A549 (cell line): ENCODE measurements at regions of chr11 and their contacts with region 1.

Region 1: DNA sequence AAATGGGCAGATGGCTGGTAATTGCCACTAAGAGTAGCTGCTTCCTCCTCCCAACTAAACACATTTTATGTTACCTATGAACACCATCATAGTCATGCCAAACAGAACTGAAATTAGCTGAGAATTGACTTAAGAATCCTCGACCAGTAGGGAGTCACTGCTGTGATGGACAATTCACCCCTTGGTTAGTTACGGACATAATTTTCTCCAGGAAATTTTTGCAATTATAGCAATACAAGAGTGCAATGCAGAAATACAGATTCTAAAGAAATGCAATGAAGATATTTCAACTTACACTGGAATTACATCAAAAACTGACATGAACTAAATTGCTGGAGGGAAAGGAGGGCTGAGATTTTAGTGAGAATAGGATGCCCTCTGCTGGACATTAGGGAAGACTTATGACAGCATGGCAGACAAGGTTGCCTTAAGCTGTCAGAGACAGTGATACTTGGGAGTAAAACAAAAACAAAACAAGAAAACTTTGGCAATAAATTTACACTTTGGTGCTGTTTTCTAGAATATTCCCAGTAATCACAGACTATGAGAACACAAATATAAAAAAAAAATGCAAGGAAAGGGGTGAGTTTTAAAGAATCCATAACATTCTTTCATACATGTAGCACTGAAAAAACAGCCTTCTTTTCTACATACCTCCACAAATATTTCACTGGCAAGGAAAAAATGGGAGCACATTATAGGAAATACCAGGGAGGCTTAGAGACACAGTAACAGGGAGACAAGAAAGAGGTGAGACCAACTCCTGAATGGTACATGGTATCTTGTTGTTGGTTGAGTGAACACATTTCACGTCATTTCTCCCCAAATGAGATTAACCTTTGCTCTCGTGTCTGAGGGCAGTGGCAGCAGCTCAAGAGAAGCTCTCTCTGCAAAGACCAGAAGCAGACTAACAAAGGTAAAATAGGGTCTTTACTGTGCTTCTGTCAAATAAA is 11.2 kb upstream of the PPP2R1B start:
- DNase-seq: peak; percentile 47 to 66
- ATAC-seq: peak; percentile 92 to 98
- H3K4me3 ChIP-seq: no peak overlapping the region
- H3K27ac ChIP-seq: no peak overlapping the region
- H3K4me1 ChIP-seq: no peaks in the 10 kb centered on the region
- CTCF ChIP-seq: peak; percentile 73
- EP300 ChIP-seq: no peak
- POLR2A ChIP-seq: no peak
- RAD21 ChIP-seq: peak; percentile 76 to 84

Region 2: GRCh38 chr11:111601979-111602864 is 175.1 kb before region 1 on chr11 and contains the start of gene SIK2:
- CTCF ChIA-PET with region 1: interaction called, 30 read pairs
- POLR2A ChIA-PET with region 1: no interaction called
- DNase-seq: peak; percentile 54 to 92
- ATAC-seq: peak; percentile 94
- H3K4me3 ChIP-seq: peak within 1 kb of the TSS; percentile 95
- H3K27ac ChIP-seq: peak within 1 kb of the TSS; percentile 95 to 98
- H3K4me1 ChIP-seq: peaks cover 25% of the 10 kb centered on the region; the same call in 2 of the 3 replicates
- CTCF ChIP-seq: peak; percentile 84
- EP300 ChIP-seq: no peak
- POLR2A ChIP-seq: peak; percentile 37; the same call in 1 of the 2 replicates
- RAD21 ChIP-seq: peak; percentile 86 to 96
- polyA plus RNA-seq, gene SIK2: 9.0 and 11.4 TPM in 2 replicates

Region 3: GRCh38 chr11:111663820-111664219 is 113.5 kb before region 1 on chr11:
- CTCF ChIA-PET with region 1: no interaction called
- POLR2A ChIA-PET with region 1: no interaction called
- DNase-seq: no peak
- ATAC-seq: no peak
- H3K4me3 ChIP-seq: no peak overlapping the region
- H3K27ac ChIP-seq: no peak overlapping the region
- H3K4me1 ChIP-seq: no peaks in the 10 kb centered on the region
- CTCF ChIP-seq: no peak
- EP300 ChIP-seq: no peak
- POLR2A ChIP-seq: no peak
- RAD21 ChIP-seq: no peak

Region 4: DNA sequence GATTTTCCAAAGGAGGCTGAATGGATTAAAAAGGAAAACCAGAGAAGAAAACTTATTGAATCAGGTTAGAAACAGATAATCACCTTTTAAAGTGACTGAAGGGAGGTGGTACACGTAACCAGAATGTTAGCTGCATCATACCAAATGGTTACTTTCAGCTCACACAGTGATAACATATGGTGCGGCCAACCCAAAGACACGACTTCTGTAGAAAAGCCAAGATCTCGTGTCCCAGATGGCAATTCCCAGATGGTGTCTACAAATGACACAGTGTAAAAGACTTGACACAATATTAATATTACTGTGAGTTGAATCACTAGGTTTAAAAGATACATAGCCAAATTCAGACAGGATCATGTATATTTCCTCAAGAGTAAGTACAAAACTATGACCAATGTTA is 16.3 kb before region 1 on chr11:
- CTCF ChIA-PET with region 1: interaction called, 49 read pairs
- POLR2A ChIA-PET with region 1: interaction called, 4 read pairs
- DNase-seq: no peak
- ATAC-seq: no peak
- H3K4me3 ChIP-seq: no peak overlapping the region
- H3K27ac ChIP-seq: no peak overlapping the region
- H3K4me1 ChIP-seq: peaks cover 8% of the 10 kb centered on the region; the same call in 1 of the 3 replicates
- CTCF ChIP-seq: no peak
- EP300 ChIP-seq: no peak
- POLR2A ChIP-seq: no peak
- RAD21 ChIP-seq: no peak

Region 5: DNA sequence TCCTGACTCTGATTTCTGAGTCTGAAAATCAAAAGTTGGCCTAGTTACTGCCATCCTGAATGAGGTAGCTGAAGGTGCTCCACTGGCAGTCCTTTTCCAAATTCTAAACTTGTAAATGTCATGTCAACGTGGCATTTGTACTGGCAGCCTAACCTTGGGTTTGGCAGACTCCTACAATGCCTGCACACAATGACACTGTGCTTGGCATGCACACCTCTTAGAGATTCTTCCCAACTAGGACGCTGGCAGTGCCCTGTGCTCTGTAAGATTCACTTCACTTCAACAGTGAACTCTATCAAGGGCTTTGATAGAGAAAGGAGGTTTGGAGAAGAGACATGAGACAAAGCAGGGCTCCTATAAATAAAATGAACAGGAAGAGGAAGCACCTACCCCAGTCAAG is 10.7 kb after region 1 on chr11:
- CTCF ChIA-PET with region 1: interaction called, 27 read pairs
- POLR2A ChIA-PET with region 1: no interaction called
- DNase-seq: no peak
- ATAC-seq: no peak
- H3K4me3 ChIP-seq: no peak overlapping the region
- H3K27ac ChIP-seq: no peak overlapping the region
- H3K4me1 ChIP-seq: no peaks in the 10 kb centered on the region
- CTCF ChIP-seq: no peak
- EP300 ChIP-seq: no peak
- POLR2A ChIP-seq: no peak
- RAD21 ChIP-seq: no peak

Region 6: DNA sequence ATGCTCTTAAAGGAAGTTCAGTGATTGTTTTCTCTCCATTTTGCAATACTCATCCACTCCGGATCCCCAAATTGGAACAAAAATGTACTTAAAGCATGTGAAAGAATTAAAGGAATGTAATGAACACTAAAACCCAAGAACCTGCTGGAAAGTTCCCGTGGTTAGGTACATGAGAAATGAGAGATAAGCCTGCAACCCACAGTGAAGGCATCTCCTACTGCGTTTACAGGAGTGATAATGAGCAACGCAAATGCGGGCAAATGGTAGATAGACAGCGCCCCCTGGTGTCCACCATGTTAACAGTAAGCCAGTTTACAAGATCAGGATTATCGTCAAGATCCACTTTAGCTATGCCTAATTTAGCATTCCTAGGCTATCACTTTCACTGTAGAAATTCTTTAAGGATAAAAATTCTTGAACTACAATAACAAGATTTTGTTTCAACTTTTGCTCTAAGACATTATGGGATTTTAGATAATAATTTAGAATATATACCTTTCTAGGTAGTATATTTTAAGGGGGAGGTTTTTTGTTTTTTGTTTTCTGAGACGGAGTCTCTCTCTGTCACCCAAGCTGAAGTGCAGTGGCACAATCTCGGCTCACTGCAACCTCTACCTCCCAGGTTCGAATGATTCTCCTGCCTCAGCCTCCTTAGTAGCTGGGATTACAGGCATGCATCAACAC is 64.1 kb after region 1 on chr11:
- CTCF ChIA-PET with region 1: interaction called, 12 read pairs
- POLR2A ChIA-PET with region 1: no interaction called
- DNase-seq: peak; percentile 52 to 75
- ATAC-seq: peak; percentile 83 to 97
- H3K4me3 ChIP-seq: no peak overlapping the region
- H3K27ac ChIP-seq: 0 out of 6 replicates have a peak overlapping the region, but pooled peaks of 1 of the 2 experiments have one; percentile 53
- H3K4me1 ChIP-seq: no peaks in the 10 kb centered on the region; the same call in 2 of the 3 replicates
- CTCF ChIP-seq: peak; percentile 85
- EP300 ChIP-seq: no peak
- POLR2A ChIP-seq: no peak
- RAD21 ChIP-seq: peak; percentile 78 to 83

Region 7: GRCh38 chr11:111878849-111879636 is 101.7 kb after region 1 on chr11 and contains the starts of genes CFAP68 and FDXACB1:
- CTCF ChIA-PET with region 1: no interaction called
- POLR2A ChIA-PET with region 1: no interaction called
- DNase-seq: peak; percentile 83 to 98
- ATAC-seq: peak; percentile 96 to 97
- H3K4me3 ChIP-seq: peak within 1 kb of the TSS; percentile 78
- H3K27ac ChIP-seq: peak within 1 kb of the TSS; percentile 80 to 99
- H3K4me1 ChIP-seq: peaks cover 9% of the 10 kb centered on the region; the same call in 1 of the 3 replicates
- CTCF ChIP-seq: peak; percentile 56
- EP300 ChIP-seq: no peak
- POLR2A ChIP-seq: peak; percentile 18; the same call in 1 of the 2 replicates
- RAD21 ChIP-seq: peak; percentile 69 to 81
- polyA plus RNA-seq, gene CFAP68: 59.7 and 84.6 TPM in 2 replicates
- polyA plus RNA-seq, gene FDXACB1: 2.4 and 3.0 TPM in 2 replicates